ENCODE measurements at regions of chr2 and their contacts with region 1.

Region 1: GRCh38 chr2:96856776-96857673 is 791 bp downstream of the ANKRD39 start:
- DNase-seq: peak; percentile 78
- H3K4me3 ChIP-seq: peak overlapping the region; percentile 64 to 85 (median 74)
- H3K27ac ChIP-seq: peak overlapping the region; percentile 87 to 100 (median 92)
- H3K4me1 ChIP-seq: peaks cover 0 to 58% (median 53%) of the 10 kb centered on the region in 4 donors
- H3K27me3 ChIP-seq: no peaks in the 10 kb centered on the region
- CTCF ChIP-seq: no peak
- EP300 ChIP-seq: no peak
- POLR2A ChIP-seq: no peak

Region 2: GRCh38 chr2:96638144-96639121 is 218.6 kb before region 1 on chr2 and contains the start of gene KANSL3:
- intact Hi-C with region 1: loop called (anchors 2 kb)
- DNase-seq: peak; percentile 96
- H3K4me3 ChIP-seq: peak within 1 kb of the TSS; percentile 65 to 76 (median 72)
- H3K27ac ChIP-seq: peak within 1 kb of the TSS; percentile 92 to 98 (median 92)
- H3K4me1 ChIP-seq: peaks cover 3 to 38% (median 29%) of the 10 kb centered on the region in 4 donors
- H3K27me3 ChIP-seq: no peaks in the 10 kb centered on the region
- CTCF ChIP-seq: no peak
- EP300 ChIP-seq: peak in 1 of 4 donors; percentile 63
- POLR2A ChIP-seq: peak; percentile 76 to 85
- total RNA-seq, gene KANSL3: 35.4 to 55.0 (median 47.7) TPM

Region 3: GRCh38 chr2:96816128-96816835 is 40.7 kb before region 1 on chr2 and contains the start of gene CNNM3:
- intact Hi-C with region 1: loop called (anchors 5 kb)
- DNase-seq: peak; percentile 98
- H3K4me3 ChIP-seq: peak within 1 kb of the TSS; percentile 60 to 88 (median 68)
- H3K27ac ChIP-seq: peak within 1 kb of the TSS; percentile 85 to 96 (median 96)
- H3K4me1 ChIP-seq: peaks cover 0 to 55% (median 45%) of the 10 kb centered on the region in 4 donors
- H3K27me3 ChIP-seq: no peaks in the 10 kb centered on the region
- CTCF ChIP-seq: peak; percentile 31 to 77 (median 63)
- EP300 ChIP-seq: no peak
- POLR2A ChIP-seq: peak in 1 of 2 donors; percentile 46
- total RNA-seq, gene CNNM3: 8.9 to 16.6 (median 11.8) TPM

Region 4: DNA sequence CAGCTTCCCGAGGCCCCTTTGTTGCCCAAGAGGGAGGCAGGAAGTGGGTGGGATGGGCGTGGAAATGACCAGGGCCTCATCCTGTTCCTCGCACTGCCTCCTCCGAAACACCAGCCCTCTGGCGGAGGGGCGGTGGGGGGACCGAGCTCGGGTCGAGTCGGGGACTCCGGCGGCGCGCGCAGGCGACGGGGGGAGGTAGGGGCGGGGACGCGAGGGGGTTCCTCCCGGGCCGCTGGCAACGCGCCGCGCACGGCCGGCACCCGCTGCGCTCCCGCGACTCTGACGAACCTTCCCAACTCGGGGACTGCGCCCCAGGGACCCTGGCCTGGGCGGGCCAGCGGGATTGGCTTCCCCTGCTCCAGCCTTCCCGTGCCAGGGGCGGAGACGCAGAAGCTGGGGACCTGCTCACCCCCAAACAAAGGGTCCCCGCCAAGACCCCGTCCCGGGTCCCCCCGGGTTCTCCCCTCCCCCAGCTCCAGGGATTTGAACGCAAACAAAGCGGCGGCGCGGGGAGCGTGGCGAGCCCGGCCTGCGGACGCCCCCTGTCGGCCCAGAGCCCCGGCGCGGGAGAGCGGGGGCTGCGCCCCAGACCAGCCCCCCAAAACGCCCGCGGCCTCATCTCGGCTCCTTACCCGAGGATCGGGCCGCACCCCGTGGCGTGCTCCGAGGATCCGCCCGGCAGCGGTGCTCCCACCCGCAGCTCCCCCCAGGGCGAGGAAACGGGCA is 11.7 kb after region 1 on chr2:
- intact Hi-C with region 1: loop called (anchors 1 kb)
- DNase-seq: peak; percentile 97
- H3K4me3 ChIP-seq: peak overlapping the region; percentile 65 to 98 (median 96)
- H3K27ac ChIP-seq: peak overlapping the region; percentile 99 to 100 (median 100)
- H3K4me1 ChIP-seq: peaks cover 0 to 71% (median 67%) of the 10 kb centered on the region in 4 donors
- H3K27me3 ChIP-seq: no peaks in the 10 kb centered on the region
- CTCF ChIP-seq: peak; percentile 17 to 72 (median 23)
- EP300 ChIP-seq: no peak
- POLR2A ChIP-seq: no peak

Region 5: GRCh38 chr2:96907115-96908041 is 50.4 kb after region 1 on chr2:
- intact Hi-C with region 1: loop called (anchors 1 kb)
- DNase-seq: peak; percentile 97
- H3K4me3 ChIP-seq: peak overlapping the region; percentile 23 to 30 (median 26)
- H3K27ac ChIP-seq: peak overlapping the region; percentile 92 to 97 (median 93)
- H3K4me1 ChIP-seq: peaks cover 5 to 62% (median 56%) of the 10 kb centered on the region in 4 donors
- H3K27me3 ChIP-seq: no peaks in the 10 kb centered on the region
- CTCF ChIP-seq: no peak
- EP300 ChIP-seq: peak in 2 of 4 donors; percentile 69 to 73
- POLR2A ChIP-seq: peak; percentile 50 to 56

Region 6: GRCh38 chr2:96918754-96919550 is 61.9 kb after region 1 on chr2:
- intact Hi-C with region 1: no loop called
- DNase-seq: no peak
- H3K4me3 ChIP-seq: no peak overlapping the region
- H3K27ac ChIP-seq: no peak overlapping the region
- H3K4me1 ChIP-seq: peaks cover 0 to 27% (median 14%) of the 10 kb centered on the region in 4 donors
- H3K27me3 ChIP-seq: no peaks in the 10 kb centered on the region
- CTCF ChIP-seq: no peak
- EP300 ChIP-seq: no peak
- POLR2A ChIP-seq: no peak

Region 7: DNA sequence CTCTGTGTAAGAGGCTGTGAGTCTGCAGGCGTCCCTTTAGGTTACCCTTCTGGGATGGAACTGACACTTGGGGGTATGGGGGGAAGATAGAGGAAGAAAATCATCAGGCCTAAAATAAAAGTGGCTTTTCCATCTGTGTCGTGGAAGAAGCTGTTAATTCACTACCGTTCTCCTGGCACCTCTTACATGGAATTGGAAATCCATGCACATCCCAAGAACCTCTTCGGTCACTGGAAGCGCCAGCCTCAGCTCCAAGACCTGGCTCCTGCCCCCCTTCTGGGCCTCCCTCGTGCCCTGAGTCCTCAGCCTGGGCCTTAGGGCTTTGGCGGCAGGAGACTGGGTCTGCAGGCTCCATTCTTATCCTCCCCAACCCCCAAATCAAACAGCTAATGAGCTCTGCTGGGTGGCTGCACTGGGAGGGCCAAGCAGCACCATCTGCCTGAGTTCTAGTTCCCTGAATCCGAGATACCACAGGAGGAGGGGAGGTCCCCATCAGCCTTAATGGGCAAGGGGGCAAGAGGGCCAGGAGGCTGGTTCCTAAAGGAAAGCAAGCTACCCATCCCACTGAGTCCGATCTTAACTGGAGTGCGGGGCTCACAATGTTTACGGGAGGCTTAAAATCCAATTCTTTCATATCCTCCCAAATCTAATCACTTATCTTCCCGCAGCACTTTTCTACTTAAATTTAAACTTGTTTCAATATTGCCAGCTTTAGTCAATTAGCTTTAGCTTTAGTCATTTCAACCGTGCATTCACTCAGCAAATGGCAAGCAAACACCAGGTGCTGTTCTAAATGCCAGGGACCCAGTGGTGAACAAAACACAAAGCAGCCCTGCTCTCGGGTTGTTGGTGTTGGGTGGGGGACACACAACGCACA is 76.5 kb after region 1 on chr2:
- intact Hi-C with region 1: no loop called
- DNase-seq: no peak
- H3K4me3 ChIP-seq: no peak overlapping the region
- H3K27ac ChIP-seq: no peak overlapping the region
- H3K4me1 ChIP-seq: peaks cover 0 to 10% (median 6%) of the 10 kb centered on the region in 4 donors
- H3K27me3 ChIP-seq: no peaks in the 10 kb centered on the region
- CTCF ChIP-seq: no peak
- EP300 ChIP-seq: no peak
- POLR2A ChIP-seq: no peak

Region 8: GRCh38 chr2:96951093-96951654 is 94.1 kb after region 1 on chr2:
- intact Hi-C with region 1: loop called (anchors 1 kb)
- DNase-seq: peak; percentile 87
- H3K4me3 ChIP-seq: no peak overlapping the region
- H3K27ac ChIP-seq: peak overlapping the region; percentile 72 to 88 (median 82)
- H3K4me1 ChIP-seq: peaks cover 0 to 62% (median 55%) of the 10 kb centered on the region in 4 donors
- H3K27me3 ChIP-seq: no peaks in the 10 kb centered on the region
- CTCF ChIP-seq: peak; percentile 93 to 98 (median 96)
- EP300 ChIP-seq: no peak
- POLR2A ChIP-seq: no peak

Region 9: DNA sequence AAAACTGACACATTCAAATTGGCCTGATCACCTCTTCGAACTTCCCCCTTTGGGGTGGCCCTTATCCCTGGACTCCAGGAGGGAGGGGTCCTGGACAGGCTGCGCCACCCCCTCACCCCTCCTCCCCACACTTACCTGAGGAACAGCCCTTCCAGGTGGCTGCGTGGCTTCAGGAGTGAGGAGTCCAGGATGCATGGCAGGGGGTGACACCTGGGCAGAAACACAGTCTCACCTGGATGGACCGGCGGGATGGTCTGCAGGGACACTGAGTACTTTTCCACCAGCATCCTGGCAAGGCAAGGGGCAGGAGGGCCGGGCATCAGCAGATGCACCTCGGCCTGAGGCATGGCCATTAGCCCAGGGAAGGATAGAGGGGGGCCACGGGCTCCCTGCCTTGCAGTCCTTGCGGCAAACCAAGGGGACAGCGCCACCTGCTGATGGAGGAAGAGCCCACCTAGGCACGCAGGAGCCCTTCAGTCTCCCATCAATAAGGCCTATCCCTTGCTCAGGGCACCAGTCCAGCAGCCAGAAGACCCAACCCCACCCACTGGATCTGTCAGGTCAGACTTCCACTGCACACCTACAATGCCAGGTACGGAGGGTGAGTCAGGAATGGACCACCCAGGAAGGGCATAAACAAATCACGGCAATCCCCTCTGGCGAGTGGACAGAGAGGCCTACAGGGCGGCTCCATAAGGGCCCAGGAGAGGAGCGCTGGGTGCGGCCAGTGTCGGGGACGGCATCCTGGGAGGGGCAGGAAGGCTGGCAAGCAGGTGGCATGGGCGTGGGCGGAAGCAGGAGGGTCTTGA is 103.3 kb after region 1 on chr2:
- intact Hi-C with region 1: loop called (anchors 1 kb)
- DNase-seq: peak; percentile 95
- H3K4me3 ChIP-seq: no peak overlapping the region
- H3K27ac ChIP-seq: no peak overlapping the region
- H3K4me1 ChIP-seq: peaks cover 0 to 15% (median 7%) of the 10 kb centered on the region in 4 donors
- H3K27me3 ChIP-seq: no peaks in the 10 kb centered on the region
- CTCF ChIP-seq: peak; percentile 91 to 96 (median 94)
- EP300 ChIP-seq: no peak
- POLR2A ChIP-seq: no peak

Measured in sigmoid colon (tissue), 7 donors.